ENCODE measurements at regions of chr4 and their contacts with region 1.

Region 1: DNA sequence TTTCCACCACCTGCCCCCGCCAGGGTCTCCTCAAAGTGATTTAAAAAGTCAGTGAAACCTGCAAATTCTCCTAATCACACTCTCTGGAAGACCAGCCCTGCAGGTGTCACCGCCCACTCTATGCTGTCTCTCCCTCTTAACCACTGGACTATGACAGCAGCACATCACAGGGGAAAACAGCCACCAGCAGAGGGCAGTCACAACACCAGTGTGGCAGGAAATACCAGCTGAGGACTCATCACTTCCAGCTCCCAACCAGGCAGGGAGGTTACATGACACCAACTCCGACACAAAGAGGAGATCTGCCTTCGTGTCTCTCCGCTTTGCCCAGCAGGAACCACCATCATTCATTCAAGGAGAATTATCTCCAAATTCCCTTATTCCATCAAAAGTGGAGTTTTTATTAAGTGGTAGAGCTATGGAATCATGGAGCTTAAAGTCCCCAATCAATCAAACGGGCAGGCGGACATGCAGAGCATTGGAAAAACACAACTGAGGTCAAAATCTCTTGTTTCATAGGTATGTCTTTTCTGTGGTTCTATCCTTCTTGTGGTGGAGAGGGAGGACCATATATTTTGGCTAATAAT is 91.3 kb downstream of the NSUN7 start:
- DNase-seq: peak; percentile 90

Region 2: DNA sequence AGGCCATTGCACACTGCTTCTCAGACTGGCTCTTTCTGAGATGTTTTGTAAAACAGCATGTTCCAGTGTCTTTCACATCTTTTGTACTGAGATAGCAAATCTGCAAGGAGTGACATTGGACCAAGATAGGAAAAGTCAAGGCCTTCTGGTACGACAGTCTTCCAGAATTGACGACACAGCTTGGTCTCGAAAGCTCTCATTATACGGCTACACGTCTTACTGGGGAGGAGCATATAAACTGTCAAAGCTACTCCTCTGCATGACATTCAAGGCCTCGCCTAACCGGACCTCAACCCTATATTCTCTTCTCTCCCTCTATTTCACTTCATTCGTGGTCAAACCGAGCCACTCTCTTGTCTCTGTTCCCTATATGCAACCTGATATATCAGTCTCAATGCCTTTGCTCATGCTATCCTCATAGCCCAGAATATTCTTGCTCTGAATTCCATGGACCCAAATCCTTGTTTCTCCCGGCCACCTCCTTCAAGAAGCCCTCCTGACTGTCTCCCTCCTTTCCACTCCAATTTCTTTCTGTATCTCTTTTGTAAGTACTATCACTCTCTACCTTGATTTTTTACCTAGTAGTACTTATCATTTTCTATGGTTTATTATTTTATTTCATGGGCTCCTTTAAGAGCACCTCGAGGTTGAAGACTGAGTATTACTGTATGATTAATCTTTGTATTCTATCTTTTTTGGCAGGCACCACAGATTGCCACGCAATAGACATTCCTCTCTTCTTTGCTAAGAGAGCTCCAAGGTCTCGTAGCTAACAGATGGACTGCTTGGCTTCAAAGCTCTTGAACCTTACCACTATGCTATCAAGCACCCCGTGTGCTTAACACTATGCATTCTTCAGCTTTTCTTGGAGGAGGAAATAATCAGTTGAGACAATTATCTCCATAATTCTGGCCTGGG is 246.6 kb before region 1 on chr4:
- intact Hi-C with region 1: no loop called
- DNase-seq: no peak

Region 3: GRCh38 chr4:40736910-40737309 is 104.2 kb before region 1 on chr4:
- intact Hi-C with region 1: loop called (anchors 5 kb)
- DNase-seq: no peak

Region 4: GRCh38 chr4:40897557-40898203 is 56.6 kb after region 1 on chr4:
- intact Hi-C with region 1: loop called (anchors 5 kb)
- DNase-seq: no peak

Region 5: GRCh38 chr4:40916880-40917279 is 75.8 kb after region 1 on chr4:
- intact Hi-C with region 1: loop called (anchors 5 kb)
- DNase-seq: no peak

Region 6: GRCh38 chr4:41256740-41257256 is 415.7 kb after region 1 on chr4 and contains the start of gene UCHL1:
- intact Hi-C with region 1: no loop called
- DNase-seq: no peak
- total RNA-seq, gene UCHL1: 76.8 TPM

Measured in cardiac septum (tissue), 1 donor.